Dendritic cell treated with granulocyte-macrophage colony-stimulating factor and Interleukin-4, amounts not matched to agents 40 ng/mL and 50 ng/mL, for 4 days (primary cell): ENCODE measurements at regions of chr1 and their contacts with region 1.

Region 1: DNA sequence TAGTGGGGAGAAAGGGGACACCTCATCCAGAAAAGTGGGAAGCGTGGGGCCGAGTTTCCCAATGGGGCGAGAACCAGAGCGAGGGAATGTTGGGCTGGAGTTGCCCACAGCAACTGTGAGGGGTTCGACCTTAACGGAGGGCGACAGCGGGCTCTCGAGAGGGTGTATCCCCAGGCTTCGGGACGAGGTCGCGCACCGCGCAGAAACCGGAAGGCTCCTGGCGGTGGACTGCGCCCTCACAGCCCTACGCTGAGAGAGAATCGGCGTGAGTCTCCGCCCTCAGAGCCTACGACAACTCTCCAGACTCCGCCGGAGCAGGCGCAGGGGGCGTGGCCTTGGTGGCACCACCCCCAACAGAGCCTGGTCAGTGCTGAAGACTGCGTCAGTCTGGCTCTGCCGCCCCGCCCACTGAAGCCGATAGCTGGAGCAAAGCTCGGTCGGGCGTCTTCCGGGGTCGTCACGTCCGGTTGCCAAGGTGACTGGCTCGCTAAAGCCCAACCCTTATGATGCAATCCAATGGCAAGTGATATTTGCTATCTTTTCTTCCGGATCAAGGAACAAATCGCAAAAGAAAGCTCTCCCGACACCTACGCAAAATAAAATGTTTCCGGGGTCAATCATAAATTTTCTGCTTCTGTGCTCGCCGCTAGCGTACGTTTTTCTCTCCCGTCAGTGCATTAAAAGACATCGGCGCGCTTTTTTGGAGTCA is at the start of gene LRIF1:
- H3K4me3 Mint-ChIP-seq: peak within 1 kb of the TSS; percentile 85
- H3K27ac Mint-ChIP-seq: peak within 1 kb of the TSS; percentile 99
- H3K4me1 Mint-ChIP-seq: peaks cover 31% of the 10 kb centered on the region
- H3K27me3 Mint-ChIP-seq: peaks cover 23% of the 10 kb centered on the region

Region 2: DNA sequence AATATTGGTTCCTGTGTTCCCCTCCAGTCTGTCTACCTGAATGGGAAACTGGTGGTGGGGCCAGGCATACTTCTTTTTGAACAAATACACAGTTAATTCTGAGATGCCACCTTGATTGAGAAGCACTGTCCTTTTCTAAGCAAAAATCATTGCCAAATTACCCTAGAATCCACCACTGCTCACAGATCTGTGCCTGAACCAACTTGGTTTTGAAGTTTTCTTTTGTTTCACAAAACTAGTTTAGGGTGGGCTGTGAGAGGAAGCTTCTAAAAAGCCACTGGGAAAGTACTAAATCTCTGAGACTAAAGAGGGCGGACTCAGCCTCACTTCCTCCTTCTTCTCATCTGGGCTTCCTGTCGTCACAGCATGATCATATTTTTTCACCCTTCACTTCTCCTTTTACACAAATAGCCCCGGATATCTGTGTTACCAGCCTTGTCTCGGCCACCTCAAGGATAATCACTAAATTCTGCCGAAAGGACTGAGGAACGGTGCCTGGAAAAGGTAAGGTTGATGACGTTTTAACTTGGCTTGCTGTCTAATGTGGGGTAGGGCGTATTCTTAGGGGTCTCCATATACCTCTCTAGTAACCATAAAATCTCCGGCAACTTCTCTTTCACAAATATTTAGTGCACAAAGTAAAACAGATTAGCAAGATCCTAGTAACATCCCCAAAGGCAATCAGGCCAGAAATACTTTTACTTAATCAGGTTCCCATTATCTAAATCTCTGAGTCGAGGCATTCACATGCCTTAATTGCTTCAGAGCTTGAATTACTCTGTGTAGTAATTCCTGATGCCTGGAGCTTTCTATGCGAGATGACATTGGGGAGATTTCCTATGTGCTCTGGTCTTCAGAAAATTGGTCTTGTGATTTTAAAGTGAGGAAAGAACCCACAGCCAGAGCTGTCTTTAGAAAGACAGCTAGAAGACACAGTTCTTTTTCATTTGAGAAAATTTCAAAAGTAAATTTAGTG is 90.8 kb before region 1 on chr1 and contains the start of gene CD53:
- intact Hi-C with region 1: loop called (anchors 5 kb)
- H3K4me3 Mint-ChIP-seq: peak within 1 kb of the TSS; percentile 94
- H3K27ac Mint-ChIP-seq: peak within 1 kb of the TSS; percentile 94
- H3K4me1 Mint-ChIP-seq: peaks cover 52% of the 10 kb centered on the region
- H3K27me3 Mint-ChIP-seq: no peaks in the 10 kb centered on the region

Region 3: GRCh38 chr1:110916669-110917306 is 47.1 kb before region 1 on chr1:
- intact Hi-C with region 1: loop called (anchors 10 kb)
- H3K4me3 Mint-ChIP-seq: no peak overlapping the region
- H3K27ac Mint-ChIP-seq: no peak overlapping the region
- H3K4me1 Mint-ChIP-seq: no peaks in the 10 kb centered on the region
- H3K27me3 Mint-ChIP-seq: peaks cover 3% of the 10 kb centered on the region